BJ (cell line): ENCODE measurements at regions of chr16 and their contacts with region 1.

Region 1: DNA sequence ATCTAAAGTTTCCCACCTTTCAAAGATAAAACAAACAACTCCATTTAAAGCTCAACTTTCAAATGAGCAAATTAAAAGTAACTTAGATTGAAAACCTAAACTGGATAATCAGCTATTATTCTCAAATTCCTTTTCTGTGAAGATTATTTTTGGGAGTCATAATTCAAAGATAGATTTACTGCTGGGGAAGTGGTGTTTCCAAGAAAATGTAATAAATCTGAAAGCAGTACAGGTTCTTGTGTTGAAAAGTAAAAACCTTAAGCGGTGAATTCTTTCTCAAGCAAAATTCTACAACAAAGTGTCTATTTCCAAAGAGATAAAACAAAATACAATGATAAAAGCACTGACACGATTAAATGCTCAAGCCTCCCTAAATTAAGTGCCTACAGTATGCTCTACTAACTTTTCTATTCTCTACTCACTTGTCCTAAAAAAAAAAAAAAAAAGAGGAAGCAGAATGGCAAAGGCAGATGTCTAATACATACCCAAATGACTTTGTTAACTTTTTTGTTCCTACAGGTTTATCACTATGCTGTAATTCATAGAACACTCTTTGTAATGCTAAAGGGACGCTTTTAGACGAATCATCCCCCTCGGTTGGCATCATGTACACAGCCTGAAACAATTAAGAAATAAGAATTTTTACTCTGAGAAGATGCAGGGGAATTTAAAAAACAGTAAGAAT is 34.5 kb downstream of the LITAFD start:
- DNase-seq: no peak
- H3K4me3 ChIP-seq: no peak overlapping the region
- H3K27me3 ChIP-seq: no peaks in the 10 kb centered on the region
- CTCF ChIP-seq: no peak

Region 2: GRCh38 chr16:8868416-8869211 is 48.1 kb before region 1 on chr16 and contains the start of gene CARHSP1:
- CTCF ChIA-PET with region 1: no interaction called
- POLR2A ChIA-PET with region 1: no interaction called
- DNase-seq: peak; percentile 29
- H3K4me3 ChIP-seq: peak within 1 kb of the TSS; percentile 76
- H3K27me3 ChIP-seq: no peaks in the 10 kb centered on the region
- CTCF ChIP-seq: no peak
- polyA plus RNA-seq, gene CARHSP1: 88.0 and 119 TPM in 2 replicates

Region 3: DNA sequence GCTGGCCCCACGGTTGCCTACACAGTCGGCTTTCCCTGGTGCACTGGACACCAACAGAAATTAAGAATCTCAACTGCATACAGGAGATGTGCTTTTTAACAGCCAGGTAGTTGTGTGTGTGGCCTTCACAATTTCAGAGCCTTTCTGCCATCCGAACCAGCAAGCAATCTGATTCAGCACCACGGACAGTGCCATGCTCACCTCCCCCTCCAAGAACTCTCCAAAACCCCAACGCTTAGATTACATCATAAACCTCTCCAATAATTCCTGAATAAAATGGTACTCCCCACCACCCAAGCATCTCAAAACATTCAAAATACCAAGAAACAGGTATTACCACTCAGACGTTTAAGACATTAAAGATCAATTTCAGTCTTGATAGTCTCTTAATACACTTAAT is 15.2 kb after region 1 on chr16:
- CTCF ChIA-PET with region 1: no interaction called
- POLR2A ChIA-PET with region 1: no interaction called
- DNase-seq: no peak
- H3K4me3 ChIP-seq: no peak overlapping the region
- H3K27me3 ChIP-seq: no peaks in the 10 kb centered on the region
- CTCF ChIP-seq: no peak

Region 4: DNA sequence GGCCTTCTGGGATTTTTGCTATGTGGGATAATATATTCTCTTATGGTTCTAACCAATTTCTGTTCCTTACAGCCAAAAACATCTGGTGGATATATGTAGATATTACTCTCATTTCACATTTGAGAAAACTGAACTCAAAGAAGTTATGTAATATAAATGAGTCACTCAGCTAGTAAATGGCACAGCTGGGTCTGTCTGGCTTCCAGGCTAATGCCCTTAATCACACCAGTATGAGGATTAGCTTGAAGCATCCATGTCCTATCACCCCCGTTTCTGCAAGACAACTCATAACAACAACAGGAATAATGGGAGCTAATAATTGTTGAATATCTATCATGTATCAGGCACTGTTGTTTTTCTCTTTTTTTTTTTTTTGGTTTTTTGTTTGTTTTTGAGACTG is 81.4 kb after region 1 on chr16:
- CTCF ChIA-PET with region 1: no interaction called
- POLR2A ChIA-PET with region 1: interaction called, 14 read pairs
- DNase-seq: peak; percentile 25
- H3K4me3 ChIP-seq: no peak overlapping the region
- H3K27me3 ChIP-seq: no peaks in the 10 kb centered on the region
- CTCF ChIP-seq: no peak